Activated naive CD4-positive, alpha-beta T cell treated with anti-CD3 and anti-CD28 coated beads for 36 hours (primary cell): ENCODE measurements at regions of chr1 and their contacts with region 1.

Region 1: GRCh38 chr1:85259118-85259911 is at the start of gene C1orf52:
- DNase-seq: peak; percentile 97
- H3K4me3 Mint-ChIP-seq: peak within 1 kb of the TSS; percentile 96
- H3K27ac Mint-ChIP-seq: peak within 1 kb of the TSS; percentile 89
- H3K4me1 Mint-ChIP-seq: peaks cover 38% of the 10 kb centered on the region
- H3K27me3 Mint-ChIP-seq: no peaks in the 10 kb centered on the region
- total RNA-seq, gene C1orf52: 28.3 to 29.5 TPM

Region 2: DNA sequence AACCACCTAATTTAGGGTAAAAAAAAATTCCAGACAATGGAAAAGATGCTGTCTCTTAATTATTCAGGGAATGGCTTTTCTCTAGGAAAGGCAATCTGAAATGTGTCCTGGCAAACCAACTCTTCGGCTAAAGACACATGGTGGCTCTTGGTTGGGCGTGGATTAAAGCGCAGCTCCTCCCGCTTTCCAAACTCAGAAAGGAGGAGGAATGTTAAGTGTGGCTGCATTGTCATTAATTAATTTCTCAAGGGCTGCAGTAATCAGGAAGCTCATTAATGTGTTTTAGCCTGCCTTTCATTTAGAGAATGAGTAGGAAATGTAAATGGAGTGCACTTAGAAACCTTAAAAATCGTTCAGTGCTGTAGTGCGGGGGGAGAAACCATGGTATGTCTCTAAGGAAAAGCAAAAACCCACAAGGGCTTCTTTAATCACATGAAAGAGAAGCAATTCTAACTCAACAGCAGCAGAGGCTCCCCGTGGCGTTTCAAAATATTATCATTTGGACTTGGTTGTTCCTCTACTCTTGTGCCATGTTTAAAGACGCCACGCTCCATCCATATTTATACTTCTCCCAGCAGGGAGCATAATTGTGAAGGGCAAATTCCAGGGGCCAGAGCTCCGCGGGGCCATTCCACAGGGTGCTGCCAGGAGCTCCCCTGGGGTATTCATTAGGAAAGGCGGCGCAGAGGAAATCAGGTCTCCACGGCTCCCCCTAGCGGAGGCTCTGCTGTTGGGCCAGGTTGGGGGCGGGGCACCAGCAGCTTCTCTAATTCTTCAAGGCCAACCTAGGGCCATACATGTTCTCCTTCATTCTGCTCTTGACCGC is 477.2 kb before region 1 on chr1:
- CTCF ChIA-PET with region 1: interaction called, 3 read pairs
- intact Hi-C with region 1: loop called (anchors 5 kb)
- DNase-seq: peak; percentile 89
- H3K4me3 Mint-ChIP-seq: peak overlapping the region; percentile 69
- H3K27ac Mint-ChIP-seq: no peak overlapping the region
- H3K4me1 Mint-ChIP-seq: peaks cover 22% of the 10 kb centered on the region
- H3K27me3 Mint-ChIP-seq: no peaks in the 10 kb centered on the region

Region 3: DNA sequence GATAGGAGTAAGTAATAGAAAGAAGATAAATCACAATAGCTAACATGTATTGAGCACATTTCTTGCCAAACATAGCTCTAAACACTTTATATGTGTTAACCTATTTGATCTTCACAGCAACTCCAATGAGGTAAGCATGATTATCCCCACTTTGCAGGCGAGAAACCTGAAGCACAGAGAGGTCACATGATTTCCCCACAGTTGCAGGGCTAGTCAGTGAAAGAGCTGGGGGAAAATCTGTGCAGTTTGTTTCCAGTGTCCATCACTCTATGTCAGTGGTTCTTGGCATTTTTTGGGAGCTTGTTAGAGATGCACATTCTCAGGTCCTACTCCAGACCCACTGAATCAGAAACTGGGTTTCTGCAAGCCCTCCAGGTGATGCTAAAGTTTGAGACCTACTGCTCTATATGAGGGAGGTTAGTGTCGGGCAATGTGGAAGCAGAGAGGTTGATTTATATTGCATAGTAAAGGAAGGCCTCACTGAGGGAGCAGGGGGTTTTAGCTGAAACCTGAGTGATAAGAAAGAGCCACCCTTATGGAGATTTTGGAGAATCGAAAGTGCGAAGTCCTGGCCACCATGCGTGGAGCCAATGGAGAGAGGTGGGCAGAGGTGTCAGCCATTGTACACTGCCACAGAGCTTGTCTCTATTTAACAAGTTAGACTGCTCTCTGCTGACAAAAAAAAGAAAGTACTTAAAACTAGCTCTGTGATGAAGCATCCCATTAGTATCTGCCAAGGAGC is 231.9 kb before region 1 on chr1:
- CTCF ChIA-PET with region 1: interaction called, 5 read pairs
- intact Hi-C with region 1: loop called (anchors 1 kb)
- DNase-seq: peak; percentile 25
- H3K4me3 Mint-ChIP-seq: no peak overlapping the region
- H3K27ac Mint-ChIP-seq: peak overlapping the region; percentile 34
- H3K4me1 Mint-ChIP-seq: peaks cover 7% of the 10 kb centered on the region
- H3K27me3 Mint-ChIP-seq: no peaks in the 10 kb centered on the region

Region 4: GRCh38 chr1:85240174-85240601 is 19.1 kb before region 1 on chr1:
- CTCF ChIA-PET with region 1: interaction called, 14 read pairs
- intact Hi-C with region 1: no loop called
- DNase-seq: peak; percentile 51
- H3K4me3 Mint-ChIP-seq: no peak overlapping the region
- H3K27ac Mint-ChIP-seq: no peak overlapping the region
- H3K4me1 Mint-ChIP-seq: peaks cover 14% of the 10 kb centered on the region
- H3K27me3 Mint-ChIP-seq: peaks cover 8% of the 10 kb centered on the region

Region 5: GRCh38 chr1:85303440-85304162 is 44.3 kb after region 1 on chr1:
- CTCF ChIA-PET with region 1: no interaction called
- intact Hi-C with region 1: no loop called
- DNase-seq: no peak
- H3K4me3 Mint-ChIP-seq: no peak overlapping the region
- H3K27ac Mint-ChIP-seq: no peak overlapping the region
- H3K4me1 Mint-ChIP-seq: peaks cover 7% of the 10 kb centered on the region
- H3K27me3 Mint-ChIP-seq: peaks cover 12% of the 10 kb centered on the region